ENCODE measurements at regions of chr18 and their contacts with region 1.

Region 1: GRCh38 chr18:48949606-48950470 is 927 bp downstream of the SMAD7 start:
- DNase-seq: no peak
- ATAC-seq: peak; percentile 35
- H3K4me3 ChIP-seq: peak overlapping the region; percentile 37 to 65
- H3K27ac ChIP-seq: peak overlapping the region; percentile 54; the same call in 1 of the 2 replicates
- H3K4me1 ChIP-seq: peaks cover 55 to 79% of the 10 kb centered on the region in 2 experiments
- H3K27me3 ChIP-seq: peaks cover 22% of the 10 kb centered on the region; the same call in 1 of the 2 replicates
- CTCF ChIP-seq: 0 out of 6 replicates have a peak, but pooled peaks of 1 of the 3 experiments have one; percentile 1
- POLR2A ChIP-seq: no peak
- RAD21 ChIP-seq: no peak

Region 2: GRCh38 chr18:49178736-49179135 is 228.9 kb after region 1 on chr18:
- CTCF ChIA-PET with region 1: no interaction called
- POLR2A ChIA-PET with region 1: no interaction called
- RAD21 ChIA-PET with region 1: no interaction called
- intact Hi-C with region 1: loop called (anchors 10 kb)
- DNase-seq: peak; percentile 19
- ATAC-seq: peak; percentile 73
- H3K4me3 ChIP-seq: no peak overlapping the region
- H3K27ac ChIP-seq: no peak overlapping the region
- H3K4me1 ChIP-seq: peaks cover 9% of the 10 kb centered on the region in 2 experiments; a peak in 2 of 4 replicates
- H3K27me3 ChIP-seq: no peaks in the 10 kb centered on the region
- CTCF ChIP-seq: peak; percentile 55 to 74 (median 69); a peak in 5 of 6 replicates
- POLR2A ChIP-seq: no peak
- RAD21 ChIP-seq: peak; percentile 73